ENCODE measurements at regions of chr3 and their contacts with region 1.

Region 1: DNA sequence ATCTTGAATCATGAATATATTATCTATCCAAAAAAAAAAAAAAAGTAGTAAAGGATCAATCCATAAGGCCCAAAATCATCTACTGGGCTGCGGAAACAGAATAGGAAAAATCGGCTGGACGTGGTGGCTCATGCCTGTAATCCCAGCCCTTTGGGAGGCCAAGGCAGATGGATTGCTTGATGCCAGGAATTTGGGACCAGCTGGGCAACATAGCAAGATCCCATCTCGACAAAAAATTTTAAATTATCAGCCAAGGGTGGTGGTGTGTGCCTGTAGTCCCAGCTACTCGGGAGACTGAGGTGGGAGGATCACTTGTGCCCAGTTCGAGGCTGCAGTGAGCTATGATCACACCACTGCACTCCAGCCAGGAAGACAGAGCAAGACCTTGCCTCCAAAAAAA is 6.1 kb upstream of the DVL3 start:
- DNase-seq: no peak
- H3K4me3 ChIP-seq: no peak overlapping the region
- H3K27ac ChIP-seq: no peak overlapping the region
- H3K4me1 ChIP-seq: peaks cover 2% of the 10 kb centered on the region
- H3K27me3 ChIP-seq: no peaks in the 10 kb centered on the region
- CTCF ChIP-seq: no peak

Region 2: DNA sequence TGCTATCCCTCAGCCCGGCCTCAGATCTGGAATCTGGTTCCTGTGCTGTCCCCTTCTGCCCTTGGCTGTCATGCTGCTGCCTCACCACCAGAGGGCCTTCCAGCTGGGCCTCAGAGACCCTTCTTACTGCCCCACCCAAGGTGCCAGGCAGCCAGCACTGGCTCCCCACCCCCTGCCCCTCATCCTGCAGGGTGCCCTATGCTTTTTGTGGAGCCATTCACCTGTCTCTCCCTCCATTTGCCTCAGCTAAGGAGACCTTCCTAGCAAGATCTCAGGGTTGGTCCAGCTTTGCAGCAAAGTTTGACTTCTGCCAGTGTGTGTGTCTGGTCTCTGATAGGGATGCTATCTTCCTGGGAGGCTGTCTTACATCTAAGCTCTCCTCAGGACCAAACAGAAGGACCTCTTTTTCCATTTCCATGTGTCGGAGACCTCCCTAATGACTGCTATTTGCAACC is 78.4 kb after region 1 on chr3:
- CTCF ChIA-PET with region 1: interaction called, 10 read pairs
- POLR2A ChIA-PET with region 1: no interaction called
- intact Hi-C with region 1: no loop called
- DNase-seq: peak; percentile 42
- H3K4me3 ChIP-seq: no peak overlapping the region
- H3K27ac ChIP-seq: no peak overlapping the region
- H3K4me1 ChIP-seq: peaks cover 5% of the 10 kb centered on the region
- H3K27me3 ChIP-seq: peaks cover 54% of the 10 kb centered on the region
- CTCF ChIP-seq: peak; percentile 87

Measured in A673 (cell line).